Vagina (tissue), 2 donors: ENCODE measurements at regions of chr3 and their contacts with region 1.

Region 1: GRCh38 chr3:9932843-9933560 is 632 bp upstream of the CRELD1 start:
- DNase-seq: peak in 1 of 2 donors; percentile 96
- H3K4me3 ChIP-seq: peak overlapping the region; percentile 75 to 89
- H3K27ac ChIP-seq: peak overlapping the region; percentile 93
- H3K4me1 ChIP-seq: peaks cover 43% of the 10 kb centered on the region
- H3K27me3 ChIP-seq: no peaks in the 10 kb centered on the region
- CTCF ChIP-seq: peak; percentile 6 to 76 (median 71)
- POLR2A ChIP-seq: no peak

Region 2: DNA sequence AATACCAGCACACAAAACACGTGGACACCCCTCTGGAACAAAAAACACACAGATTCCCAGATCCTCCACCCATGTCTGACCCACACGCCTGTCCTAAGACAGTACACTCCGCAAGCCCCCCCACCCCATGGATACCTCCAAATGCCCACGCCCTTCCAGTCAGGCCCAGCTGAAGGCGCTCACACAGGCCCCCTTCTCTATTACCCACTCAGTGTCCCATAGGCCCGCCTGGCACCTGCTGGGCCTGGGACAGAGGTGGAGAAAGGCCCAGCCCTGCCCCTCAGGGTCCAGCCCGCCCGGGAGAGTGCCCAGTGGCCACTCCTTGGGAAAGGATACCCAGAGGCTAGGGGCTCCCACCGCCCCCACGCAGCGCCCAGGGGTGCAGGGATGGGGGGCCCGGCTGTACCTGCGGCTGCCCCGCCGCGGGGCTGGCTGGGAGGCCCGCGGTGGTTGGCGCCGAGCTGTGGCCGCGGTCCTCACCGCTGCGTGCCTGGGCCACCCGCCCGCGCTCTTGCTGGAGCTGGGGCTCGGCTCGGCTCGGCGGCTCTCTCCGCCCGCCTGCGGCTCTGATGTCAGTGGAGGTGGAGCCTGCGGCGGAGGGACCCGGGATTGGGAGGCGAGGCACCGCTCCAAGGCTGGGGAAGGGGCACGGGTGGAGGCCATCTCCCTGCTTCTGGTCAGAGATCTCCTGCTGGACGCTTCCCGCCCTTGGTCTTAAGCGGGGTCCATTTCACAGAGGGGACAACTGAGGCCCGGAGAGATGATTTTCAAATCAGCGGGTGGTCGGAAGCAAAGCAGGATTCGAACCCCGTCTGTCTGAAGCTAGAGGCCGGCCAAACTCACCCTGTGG is 163.4 kb before region 1 on chr3 and contains the start of gene CAMK1:
- intact Hi-C with region 1: no loop called
- DNase-seq: no peak
- H3K4me3 ChIP-seq: peak within 1 kb of the TSS; percentile 64 to 74
- H3K27ac ChIP-seq: peak within 1 kb of the TSS; percentile 96
- H3K4me1 ChIP-seq: peaks cover 38% of the 10 kb centered on the region
- H3K27me3 ChIP-seq: no peaks in the 10 kb centered on the region
- CTCF ChIP-seq: no peak
- POLR2A ChIP-seq: peak in 1 of 2 donors; percentile 77
- total RNA-seq, gene CAMK1: 42.5 TPM

Region 3: GRCh38 chr3:9809615-9810432 is 123.2 kb before region 1 on chr3 and contains the start of gene TTLL3:
- intact Hi-C with region 1: loop called (anchors 10 kb)
- DNase-seq: no peak
- H3K4me3 ChIP-seq: peak within 1 kb of the TSS; percentile 62 to 68
- H3K27ac ChIP-seq: peak within 1 kb of the TSS; percentile 94
- H3K4me1 ChIP-seq: peaks cover 19% of the 10 kb centered on the region
- H3K27me3 ChIP-seq: no peaks in the 10 kb centered on the region
- CTCF ChIP-seq: no peak
- POLR2A ChIP-seq: peak in 1 of 2 donors; percentile 15
- total RNA-seq, gene TTLL3: 73.4 TPM

Region 4: GRCh38 chr3:9843715-9844438 is 89.1 kb before region 1 on chr3 and contains the start of gene RPUSD3:
- intact Hi-C with region 1: loop called (anchors 5 kb)
- DNase-seq: peak in 1 of 2 donors; percentile 96
- H3K4me3 ChIP-seq: peak within 1 kb of the TSS; percentile 69 to 83
- H3K27ac ChIP-seq: peak within 1 kb of the TSS; percentile 70
- H3K4me1 ChIP-seq: peaks cover 22% of the 10 kb centered on the region
- H3K27me3 ChIP-seq: no peaks in the 10 kb centered on the region
- CTCF ChIP-seq: no peak
- POLR2A ChIP-seq: peak in 1 of 2 donors; percentile 61
- total RNA-seq, gene RPUSD3: 50.6 TPM

Region 5: DNA sequence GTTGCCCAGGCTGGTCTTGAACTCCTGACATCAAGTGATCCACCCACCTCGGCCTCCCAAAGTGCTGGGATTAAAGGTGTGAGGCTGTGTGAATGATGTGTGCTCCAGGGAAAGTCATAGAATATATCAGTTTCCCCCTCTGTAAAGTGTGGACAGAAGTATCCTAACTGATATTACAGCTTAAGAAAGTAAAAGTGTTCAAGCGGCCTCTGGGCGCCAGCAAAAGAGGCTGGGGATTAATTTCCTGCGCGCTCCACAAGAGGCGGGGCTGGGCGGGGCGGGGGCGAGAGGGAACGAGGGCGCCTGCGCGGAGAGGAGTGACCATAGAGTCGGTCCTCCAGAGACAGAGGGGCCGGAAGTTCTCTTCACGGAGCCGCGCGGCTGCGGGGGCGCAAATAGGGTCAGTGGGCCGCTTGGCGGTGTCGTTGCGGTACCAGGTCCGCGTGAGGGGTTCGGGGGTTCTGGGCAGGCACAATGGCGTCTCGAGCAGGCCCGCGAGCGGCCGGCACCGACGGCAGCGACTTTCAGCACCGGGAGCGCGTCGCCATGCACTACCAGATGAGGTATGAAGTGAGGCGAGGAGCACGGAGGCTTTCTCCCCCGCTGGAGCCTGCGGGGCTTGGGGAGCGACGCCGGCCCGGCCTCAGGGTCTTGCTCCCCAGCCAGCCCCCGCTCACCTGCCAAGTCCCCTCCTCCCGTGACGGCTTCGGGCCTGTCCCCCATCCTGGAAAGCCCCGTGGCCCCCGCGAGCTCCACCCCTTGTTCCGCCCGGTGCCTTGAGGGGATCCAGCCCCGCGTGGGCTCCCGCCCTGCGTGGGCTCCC is 42.5 kb before region 1 on chr3 and contains the start of gene JAGN1:
- intact Hi-C with region 1: no loop called
- DNase-seq: no peak
- H3K4me3 ChIP-seq: peak within 1 kb of the TSS; percentile 79 to 93
- H3K27ac ChIP-seq: peak within 1 kb of the TSS; percentile 94
- H3K4me1 ChIP-seq: peaks cover 47% of the 10 kb centered on the region
- H3K27me3 ChIP-seq: no peaks in the 10 kb centered on the region
- CTCF ChIP-seq: no peak
- POLR2A ChIP-seq: peak in 1 of 2 donors; percentile 91
- total RNA-seq, gene JAGN1: 32.7 TPM

Region 6: DNA sequence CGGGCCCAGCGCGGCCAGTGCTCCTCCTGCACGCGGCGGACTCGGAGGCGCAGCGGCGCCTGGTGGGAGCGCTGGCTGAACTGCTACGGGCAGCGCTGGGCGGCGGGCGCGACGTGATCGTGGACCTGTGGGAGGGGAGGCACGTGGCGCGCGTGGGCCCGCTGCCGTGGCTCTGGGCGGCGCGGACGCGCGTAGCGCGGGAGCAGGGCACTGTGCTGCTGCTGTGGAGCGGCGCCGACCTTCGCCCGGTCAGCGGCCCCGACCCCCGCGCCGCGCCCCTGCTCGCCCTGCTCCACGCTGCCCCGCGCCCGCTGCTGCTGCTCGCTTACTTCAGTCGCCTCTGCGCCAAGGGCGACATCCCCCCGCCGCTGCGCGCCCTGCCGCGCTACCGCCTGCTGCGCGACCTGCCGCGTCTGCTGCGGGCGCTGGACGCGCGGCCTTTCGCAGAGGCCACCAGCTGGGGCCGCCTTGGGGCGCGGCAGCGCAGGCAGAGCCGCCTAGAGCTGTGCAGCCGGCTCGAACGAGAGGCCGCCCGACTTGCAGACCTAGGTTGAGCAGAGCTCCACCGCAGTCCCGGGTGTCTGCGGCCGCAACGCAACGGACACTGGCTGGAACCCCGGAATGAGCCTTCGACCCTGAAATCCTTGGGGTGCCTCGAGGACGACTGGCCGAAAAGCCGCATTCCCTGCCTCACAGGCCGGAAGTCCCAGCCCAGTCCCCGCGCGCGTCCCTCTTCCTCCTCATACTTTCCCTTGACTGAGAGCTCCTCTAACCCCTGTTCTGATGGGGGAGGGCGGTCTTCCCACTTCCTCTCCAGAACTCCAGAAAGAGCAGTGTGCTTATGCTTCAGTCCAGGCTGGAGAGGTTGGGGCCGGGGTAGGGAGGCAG is 17.5 kb before region 1 on chr3:
- intact Hi-C with region 1: loop called (anchors 2 kb)
- DNase-seq: peak in 1 of 2 donors; percentile 89
- H3K4me3 ChIP-seq: peak overlapping the region; percentile 58 to 76
- H3K27ac ChIP-seq: peak overlapping the region; percentile 90
- H3K4me1 ChIP-seq: peaks cover 61% of the 10 kb centered on the region
- H3K27me3 ChIP-seq: no peaks in the 10 kb centered on the region
- CTCF ChIP-seq: peak in 1 of 3 experiments; percentile 33
- POLR2A ChIP-seq: peak in 1 of 2 donors; percentile 7

Region 7: GRCh38 chr3:10026084-10026890 is 93.3 kb after region 1 on chr3 and contains the start of gene FANCD2:
- intact Hi-C with region 1: loop called (anchors 5 kb)
- DNase-seq: no peak
- H3K4me3 ChIP-seq: peak within 1 kb of the TSS; percentile 68 to 83
- H3K27ac ChIP-seq: peak within 1 kb of the TSS; percentile 71
- H3K4me1 ChIP-seq: peaks cover 26% of the 10 kb centered on the region
- H3K27me3 ChIP-seq: no peaks in the 10 kb centered on the region
- CTCF ChIP-seq: no peak
- POLR2A ChIP-seq: peak in 1 of 2 donors; percentile 42
- total RNA-seq, gene FANCD2: 4.4 TPM